ENCODE measurements at regions of chr12 and their contacts with region 1.

Region 1: DNA sequence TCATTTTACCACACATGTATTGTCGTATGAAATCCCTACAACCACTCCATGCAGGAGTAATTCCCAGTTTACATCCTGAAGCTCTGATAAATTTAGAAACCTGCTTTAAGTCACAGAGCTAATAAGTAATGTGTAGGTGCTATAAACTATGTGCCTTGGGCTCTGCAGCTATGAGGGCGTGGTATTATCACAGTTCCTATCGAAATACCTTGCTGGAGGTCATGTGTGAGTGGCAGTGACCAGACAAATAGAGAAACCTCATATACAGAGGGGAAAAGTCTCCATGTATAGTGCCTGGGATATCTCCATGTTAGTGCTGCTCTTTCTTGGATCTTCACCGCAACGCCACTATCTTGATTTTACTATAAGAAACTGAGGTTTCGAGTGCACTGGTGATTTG is 883 bp upstream of the TBC1D15 start:
- DNase-seq: no peak
- ATAC-seq: no peak

Region 2: DNA sequence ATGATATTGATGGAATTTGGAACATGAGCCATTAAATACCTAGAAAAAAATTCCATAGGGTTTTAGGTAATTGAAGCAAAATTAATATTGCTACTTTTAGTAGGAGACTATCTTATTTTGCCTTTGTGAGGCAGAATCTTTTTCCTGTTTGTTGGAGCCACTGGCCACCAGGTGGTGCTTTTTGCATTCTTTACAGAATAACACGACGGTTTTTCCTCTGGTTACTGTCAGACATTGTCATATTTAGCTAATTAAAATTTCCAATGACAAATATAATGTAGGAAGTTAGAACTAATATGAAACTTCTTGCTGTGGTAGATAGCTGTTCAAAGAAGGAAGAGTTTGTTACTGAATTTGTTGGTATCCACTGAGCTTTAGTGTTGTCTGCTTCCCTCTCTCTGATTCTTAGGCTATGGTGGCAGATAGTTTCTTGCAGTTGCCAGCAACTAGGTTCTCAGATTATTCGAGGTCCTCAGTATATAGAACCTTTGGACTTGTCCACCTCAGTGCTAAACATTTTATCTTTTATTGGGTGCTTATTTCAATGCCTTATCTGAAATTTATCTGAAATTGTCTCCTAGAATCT is 58.3 kb before region 1 on chr12:
- intact Hi-C with region 1: loop called in 1 of 2 experiments (anchors 10 kb)
- DNase-seq: peak; percentile 31
- ATAC-seq: peak in 1 of 2 donors; percentile 34